Left lung (tissue), 14 donors: ENCODE measurements at regions of chr22 and their contacts with region 1.

Region 1: DNA sequence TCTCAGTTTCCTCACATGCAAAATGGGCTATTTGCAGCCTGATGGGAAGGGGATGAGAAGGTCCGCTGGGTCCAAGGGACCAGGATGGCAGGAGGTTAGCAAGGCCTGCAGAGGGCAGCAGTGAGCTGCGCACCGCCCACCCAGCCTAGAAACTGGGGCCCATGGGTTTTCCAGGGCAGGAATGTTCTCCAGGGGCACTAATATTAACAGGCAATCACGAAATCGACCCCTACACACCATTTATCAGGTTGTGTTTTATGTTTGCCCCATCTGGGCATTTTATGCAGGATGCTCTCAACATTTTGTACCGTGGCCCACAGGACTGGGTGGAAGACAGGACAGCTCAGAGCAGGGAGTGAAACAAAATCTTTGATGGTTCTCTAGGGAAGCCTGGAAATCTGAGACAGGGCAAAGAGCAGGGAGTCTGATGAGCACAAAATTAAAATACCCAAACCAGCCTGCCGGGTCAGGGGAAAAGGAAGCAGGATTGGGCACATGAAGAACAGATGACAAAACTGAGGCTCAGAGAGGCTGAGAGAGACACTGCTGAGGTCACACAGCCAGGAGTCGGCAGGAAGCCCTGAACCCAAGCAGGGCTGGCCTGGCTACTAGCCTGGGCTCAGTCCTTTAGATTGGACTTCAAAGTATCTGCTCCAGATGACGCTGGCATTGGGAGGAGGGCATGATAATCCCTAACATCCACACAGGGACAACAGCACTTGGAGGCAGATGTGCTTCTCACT is 1.6 kb upstream of the BCR start:
- DNase-seq: peak in 3 of 4 donors; percentile 65 to 91 (median 80)
- ATAC-seq: peak; percentile 67
- H3K4me3 ChIP-seq: no peak overlapping the region
- H3K27ac ChIP-seq: peak overlapping the region in 1 of 2 donors; percentile 35
- H3K4me1 ChIP-seq: peaks cover 19 to 49% of the 10 kb centered on the region in 2 donors
- H3K27me3 ChIP-seq: no peaks in the 10 kb centered on the region
- CTCF ChIP-seq: peak; percentile 95 to 97

Region 2: DNA sequence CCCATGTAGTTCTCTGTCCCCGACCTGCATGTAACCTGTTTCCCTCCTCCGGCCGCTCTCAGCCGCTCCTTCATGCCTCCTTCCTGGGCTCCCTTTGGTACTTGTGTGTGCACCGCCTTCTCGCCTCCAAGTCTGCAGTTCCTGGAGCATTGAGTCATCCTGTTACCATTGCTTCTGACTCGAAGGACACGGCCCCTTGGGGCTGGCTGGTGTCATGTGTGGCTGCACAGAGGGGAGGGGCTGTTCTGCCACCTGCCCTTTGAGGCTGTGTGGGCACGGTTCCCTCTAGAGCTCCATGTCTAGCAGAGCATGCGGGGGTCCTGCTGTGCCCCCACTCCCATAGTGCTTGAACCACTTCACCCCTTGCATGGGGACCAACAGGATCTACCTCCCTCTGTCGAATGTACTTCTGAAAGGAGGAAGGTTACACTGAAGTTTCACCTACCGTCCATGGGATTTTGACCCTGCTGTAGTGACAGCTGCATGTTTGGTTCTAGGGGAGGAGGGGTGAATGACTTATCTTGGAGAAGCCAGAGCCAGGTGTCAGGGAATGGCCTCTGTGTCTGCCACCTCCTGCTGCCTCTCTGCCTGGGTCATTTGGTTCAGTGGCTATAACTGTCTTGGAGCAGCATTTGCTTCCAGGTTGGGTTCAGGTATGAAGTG is 41.3 kb after region 1 on chr22:
- intact Hi-C with region 1: loop called in 1 of 2 experiments (anchors 5 kb)
- DNase-seq: peak in 2 of 4 donors; percentile 73 to 83
- ATAC-seq: peak; percentile 74
- H3K4me3 ChIP-seq: peak overlapping the region in 1 of 2 donors; percentile 7
- H3K27ac ChIP-seq: peak overlapping the region; percentile 81 to 83
- H3K4me1 ChIP-seq: peaks cover 72 to 100% of the 10 kb centered on the region in 2 donors
- H3K27me3 ChIP-seq: no peaks in the 10 kb centered on the region
- CTCF ChIP-seq: no peak

Region 3: GRCh38 chr22:23281406-23282088 is 102.9 kb after region 1 on chr22:
- intact Hi-C with region 1: loop called (anchors 2 to 5 kb)
- DNase-seq: peak; percentile 70 to 92 (median 84)
- ATAC-seq: peak; percentile 76
- H3K4me3 ChIP-seq: no peak overlapping the region
- H3K27ac ChIP-seq: peak overlapping the region; percentile 70 to 71
- H3K4me1 ChIP-seq: peaks cover 23 to 44% of the 10 kb centered on the region in 2 donors
- H3K27me3 ChIP-seq: no peaks in the 10 kb centered on the region
- CTCF ChIP-seq: peak; percentile 87 to 93

Region 4: DNA sequence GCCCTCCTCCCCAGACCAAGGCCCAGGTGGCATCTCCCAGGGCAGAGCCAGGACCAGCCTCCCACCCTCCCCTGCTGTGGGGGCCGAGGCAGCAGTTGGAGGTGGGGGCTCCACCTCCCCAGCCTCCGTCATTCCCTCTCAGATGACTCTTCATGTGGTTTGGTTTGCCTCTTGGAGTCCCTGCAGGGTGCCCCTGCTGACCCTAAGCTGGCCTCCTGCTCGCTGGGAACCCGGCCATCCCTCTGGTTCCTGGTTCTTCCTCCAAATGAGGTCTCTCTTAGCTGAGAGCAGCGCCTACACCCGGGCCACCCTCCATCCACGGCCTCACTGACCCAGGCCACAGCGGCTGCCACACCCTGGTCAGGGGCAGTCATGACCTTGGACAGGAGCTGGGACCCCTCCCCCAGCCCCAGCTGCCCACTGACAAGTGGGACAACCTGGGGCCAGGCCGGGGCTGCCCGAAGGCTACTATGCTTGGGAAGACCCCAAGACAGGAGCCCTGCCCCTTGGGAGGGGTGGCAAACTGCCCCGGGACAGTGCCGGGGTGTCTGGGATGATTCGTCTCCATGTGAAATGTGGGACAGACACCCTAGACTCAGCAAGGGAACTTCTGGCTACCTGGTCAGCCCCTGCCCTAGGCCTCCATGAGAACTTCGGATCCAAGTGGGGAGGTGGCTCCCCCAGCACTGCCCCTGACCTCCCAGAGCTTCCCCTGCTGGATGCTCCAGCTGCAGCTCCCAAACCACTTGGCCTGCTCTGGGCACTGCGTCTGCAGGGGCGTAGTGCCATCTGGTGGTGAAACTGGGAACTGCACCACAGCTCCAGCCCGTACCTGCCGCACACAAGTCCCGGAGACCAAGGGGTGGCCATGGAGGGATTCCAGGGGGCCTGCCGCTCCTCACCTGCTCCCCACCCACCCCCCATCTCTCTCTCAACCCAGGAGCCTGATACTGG is 206.9 kb after region 1 on chr22:
- intact Hi-C with region 1: loop called in 1 of 2 experiments (anchors 10 kb)
- DNase-seq: peak; percentile 68 to 92 (median 80)
- ATAC-seq: peak; percentile 93
- H3K4me3 ChIP-seq: no peak overlapping the region
- H3K27ac ChIP-seq: no peak overlapping the region
- H3K4me1 ChIP-seq: peaks cover 0 to 4% of the 10 kb centered on the region in 2 donors
- H3K27me3 ChIP-seq: no peaks in the 10 kb centered on the region
- CTCF ChIP-seq: peak; percentile 99